GM12878 (cell line): ENCODE measurements at regions of chr7 and their contacts with region 1.

Region 1: GRCh38 chr7:67753891-67754290 is 757.3 kb downstream of the TYW1 start:
- DNase-seq: no peak
- ATAC-seq: no peak
- H3K4me3 ChIP-seq: no peak overlapping the region
- H3K27ac ChIP-seq: no peak overlapping the region
- H3K4me1 ChIP-seq: no peaks in the 10 kb centered on the region
- H3K27me3 ChIP-seq: no peaks in the 10 kb centered on the region
- CTCF ChIP-seq: no peak
- EP300 ChIP-seq: no peak
- POLR2A ChIP-seq: no peak
- RAD21 ChIP-seq: no peak

Region 2: DNA sequence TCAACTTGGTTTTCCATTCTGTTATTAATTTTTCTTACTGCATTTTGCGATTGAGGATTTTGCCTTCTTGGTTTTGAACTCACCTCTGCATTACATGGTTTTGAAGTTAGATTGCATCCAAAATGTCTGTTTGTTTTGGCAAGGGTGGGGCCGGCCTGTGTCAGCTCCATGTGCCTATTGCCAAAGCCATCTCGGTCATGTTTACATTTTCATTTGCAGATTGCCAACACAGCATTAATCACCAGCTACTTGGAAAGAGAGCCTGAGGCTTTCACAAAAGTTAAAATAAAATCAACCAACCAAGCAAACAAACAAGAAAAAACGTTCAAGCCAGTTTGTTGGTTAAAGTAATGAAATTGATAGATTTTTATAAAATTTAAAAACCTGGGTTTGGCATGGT is 61.5 kb before region 1 on chr7:
- CTCF ChIA-PET with region 1: no interaction called
- POLR2A ChIA-PET with region 1: no interaction called
- RAD21 ChIA-PET with region 1: no interaction called
- SMC1A ChIA-PET with region 1: no interaction called
- in situ Hi-C with region 1: no loop called
- intact Hi-C with region 1: loop called (anchors 10 kb)
- DNase-seq: no peak
- ATAC-seq: no peak
- H3K4me3 ChIP-seq: no peak overlapping the region
- H3K27ac ChIP-seq: no peak overlapping the region
- H3K4me1 ChIP-seq: no peaks in the 10 kb centered on the region
- H3K27me3 ChIP-seq: no peaks in the 10 kb centered on the region
- CTCF ChIP-seq: no peak
- EP300 ChIP-seq: no peak
- POLR2A ChIP-seq: no peak
- RAD21 ChIP-seq: no peak

Region 3: DNA sequence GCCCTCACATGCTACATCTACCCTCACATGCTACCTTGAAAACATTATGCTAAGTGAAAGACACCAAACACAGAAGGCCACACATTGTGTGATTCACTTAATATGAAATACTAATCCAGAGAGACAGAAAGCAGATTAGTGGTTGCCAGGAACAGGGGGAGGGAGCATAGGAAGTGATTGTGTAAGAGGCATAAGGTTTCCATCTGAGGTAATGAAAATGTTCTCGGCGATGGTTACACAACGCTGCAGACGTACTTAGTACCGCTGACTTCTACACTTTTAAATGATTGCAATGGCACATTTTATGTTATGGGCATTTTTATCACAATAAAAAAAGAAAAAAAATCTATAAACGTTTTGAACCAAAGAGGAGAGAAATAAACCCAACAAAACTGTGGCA is 14.9 kb before region 1 on chr7:
- CTCF ChIA-PET with region 1: no interaction called
- POLR2A ChIA-PET with region 1: no interaction called
- RAD21 ChIA-PET with region 1: no interaction called
- SMC1A ChIA-PET with region 1: no interaction called
- in situ Hi-C with region 1: no loop called
- intact Hi-C with region 1: no loop called
- DNase-seq: no peak
- ATAC-seq: no peak
- H3K4me3 ChIP-seq: no peak overlapping the region
- H3K27ac ChIP-seq: no peak overlapping the region
- H3K4me1 ChIP-seq: no peaks in the 10 kb centered on the region
- H3K27me3 ChIP-seq: no peaks in the 10 kb centered on the region
- CTCF ChIP-seq: no peak
- EP300 ChIP-seq: no peak
- POLR2A ChIP-seq: no peak
- RAD21 ChIP-seq: no peak